WTC11 (cell line): ENCODE measurements at regions of chr19 and their contacts with region 1.

Region 1: GRCh38 chr19:40266119-40266518 is 19.0 kb downstream of the AKT2 start:
- DNase-seq: no peak
- ATAC-seq: no peak
- H3K4me3 Mint-ChIP-seq: no peak overlapping the region
- H3K27ac Mint-ChIP-seq: no peak overlapping the region; the same call in 1 of the 2 replicates
- H3K4me1 Mint-ChIP-seq: peaks cover 20% of the 10 kb centered on the region
- H3K27me3 Mint-ChIP-seq: no peaks in the 10 kb centered on the region
- CTCF ChIP-seq: no peak

Region 2: GRCh38 chr19:40246292-40247073 is 19.6 kb before region 1 on chr19:
- CTCF ChIA-PET with region 1: no interaction called
- POLR2A ChIA-PET with region 1: no interaction called
- DNase-seq: no peak
- ATAC-seq: no peak
- H3K4me3 Mint-ChIP-seq: no peak overlapping the region
- H3K27ac Mint-ChIP-seq: no peak overlapping the region
- H3K4me1 Mint-ChIP-seq: peaks cover 3% of the 10 kb centered on the region; the same call in 1 of the 2 replicates
- H3K27me3 Mint-ChIP-seq: no peaks in the 10 kb centered on the region
- CTCF ChIP-seq: no peak

Region 3: DNA sequence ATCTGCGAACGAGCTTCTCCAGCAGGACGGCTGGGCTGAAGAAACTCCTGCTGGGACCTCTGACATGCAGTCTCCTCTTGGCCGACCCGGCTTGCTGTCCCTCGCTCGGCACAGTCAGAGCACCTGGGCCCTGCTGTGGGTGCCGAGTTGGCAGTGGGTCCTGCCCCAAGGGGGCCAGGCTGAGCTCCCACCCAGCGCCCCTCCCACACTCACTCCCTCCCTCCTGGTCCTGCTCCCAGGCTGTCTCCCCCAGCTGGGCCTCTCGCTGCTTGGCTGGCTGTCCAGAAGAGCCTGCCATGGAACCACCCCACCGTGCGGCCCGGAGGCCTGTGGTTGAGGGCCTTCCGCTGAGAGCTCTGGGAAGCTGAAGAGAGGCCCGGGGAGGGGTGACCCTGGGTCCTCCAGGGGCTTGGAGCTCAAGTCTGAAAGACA is 13.0 kb after region 1 on chr19:
- CTCF ChIA-PET with region 1: interaction called, 11 read pairs
- POLR2A ChIA-PET with region 1: interaction called, 3 read pairs
- DNase-seq: no peak
- ATAC-seq: no peak
- H3K4me3 Mint-ChIP-seq: no peak overlapping the region
- H3K27ac Mint-ChIP-seq: no peak overlapping the region
- H3K4me1 Mint-ChIP-seq: peaks cover 32% of the 10 kb centered on the region
- H3K27me3 Mint-ChIP-seq: no peaks in the 10 kb centered on the region
- CTCF ChIP-seq: no peak